ENCODE measurements at regions of chr21 and their contacts with region 1.

Region 1: DNA sequence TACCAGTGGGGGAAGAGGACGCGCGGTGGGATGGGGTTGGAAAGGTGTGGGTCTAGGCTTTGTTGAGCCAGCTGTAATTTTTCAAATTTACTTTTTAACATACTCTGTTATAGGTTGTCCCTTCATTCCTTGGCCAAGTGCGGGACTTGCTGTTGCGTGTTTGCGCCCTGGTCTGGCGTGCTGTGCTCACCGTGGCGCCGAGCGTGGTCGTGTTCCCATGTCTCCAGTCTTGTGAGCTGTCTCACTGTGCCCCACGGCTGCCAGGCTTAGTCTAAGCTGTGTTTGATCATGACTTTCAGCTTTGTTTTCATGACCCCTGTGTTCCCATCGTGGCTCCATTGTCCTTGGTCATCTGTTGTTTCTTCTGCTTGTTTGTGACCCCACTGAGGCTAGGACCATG is 26.0 kb downstream of the TRAPPC10 start:
- DNase-seq: no peak
- ATAC-seq: no peak
- H3K4me3 ChIP-seq: no peak overlapping the region
- H3K27ac ChIP-seq: no peak overlapping the region
- H3K4me1 ChIP-seq: no peaks in the 10 kb centered on the region
- H3K27me3 ChIP-seq: no peaks in the 10 kb centered on the region
- CTCF ChIP-seq: no peak
- POLR2A ChIP-seq: no peak

Region 2: GRCh38 chr21:44085491-44086321 is 47.6 kb after region 1 on chr21:
- intact Hi-C with region 1: loop called in 1 of 10 experiments (anchors 1 kb)
- DNase-seq: peak in 1 of 5 donors; percentile 18
- ATAC-seq: peak; percentile 43 to 86 (median 74)
- H3K4me3 ChIP-seq: no peak overlapping the region
- H3K27ac ChIP-seq: peak overlapping the region; percentile 51 to 90 (median 81)
- H3K4me1 ChIP-seq: peaks cover 3 to 82% (median 55%) of the 10 kb centered on the region in 12 donors
- H3K27me3 ChIP-seq: no peaks in the 10 kb centered on the region
- CTCF ChIP-seq: no peak
- POLR2A ChIP-seq: no peak